ENCODE measurements at regions of chrX and their contacts with region 1.

Region 1: DNA sequence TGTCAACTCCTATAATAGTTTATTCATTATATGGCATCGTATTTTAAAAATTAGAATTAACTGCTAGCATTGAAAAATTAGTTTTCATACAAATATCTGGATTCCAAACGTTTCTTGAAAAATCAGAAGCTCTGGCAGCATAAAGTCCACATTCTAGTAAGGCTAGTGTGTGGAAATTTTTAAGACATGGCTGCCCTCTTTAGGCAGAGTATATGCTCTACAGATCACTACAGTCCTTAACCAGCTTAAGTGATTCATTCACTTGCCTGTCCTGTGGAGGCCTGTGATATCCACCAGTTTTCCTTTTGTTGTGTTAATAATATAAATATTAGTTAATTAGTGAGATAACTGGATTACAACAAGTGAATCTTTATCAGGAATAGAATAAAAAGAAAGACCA is 287.2 kb downstream of the OPHN1 start:
- DNase-seq: peak; percentile 40
- H3K4me3 Mint-ChIP-seq: no peak overlapping the region
- H3K27ac Mint-ChIP-seq: no peak overlapping the region
- H3K4me1 Mint-ChIP-seq: no peaks in the 10 kb centered on the region
- H3K27me3 Mint-ChIP-seq: peaks cover 29% of the 10 kb centered on the region
- CTCF ChIP-seq: peak; percentile 65

Region 2: GRCh38 chrX:66191563-66191962 is 1954.5 kb before region 1 on chrX:
- CTCF ChIA-PET with region 1: no interaction called
- POLR2A ChIA-PET with region 1: no interaction called
- intact Hi-C with region 1: loop called (anchors 10 kb)
- DNase-seq: no peak
- H3K4me3 Mint-ChIP-seq: no peak overlapping the region
- H3K27ac Mint-ChIP-seq: no peak overlapping the region
- H3K4me1 Mint-ChIP-seq: no peaks in the 10 kb centered on the region
- H3K27me3 Mint-ChIP-seq: no peaks in the 10 kb centered on the region
- CTCF ChIP-seq: no peak